Activated CD4-positive, alpha-beta T cell treated with anti-CD3 and anti-CD28 coated beads, Interleukin-2, amount 10 ng/mL, durations not matched to agents 24 days and 14 days (primary cell): ENCODE measurements at regions of chr3 and their contacts with region 1.

Region 1: GRCh38 chr3:15815696-15816095 is 17.9 kb upstream of the ANKRD28 start:
- DNase-seq: no peak
- H3K4me3 Mint-ChIP-seq: no peak overlapping the region
- H3K27ac Mint-ChIP-seq: no peak overlapping the region
- H3K4me1 Mint-ChIP-seq: peaks cover 23% of the 10 kb centered on the region
- H3K27me3 Mint-ChIP-seq: no peaks in the 10 kb centered on the region

Region 2: GRCh38 chr3:15676259-15676658 is 139.4 kb before region 1 on chr3:
- intact Hi-C with region 1: no loop called
- DNase-seq: no peak
- H3K4me3 Mint-ChIP-seq: no peak overlapping the region
- H3K27ac Mint-ChIP-seq: no peak overlapping the region
- H3K4me1 Mint-ChIP-seq: no peaks in the 10 kb centered on the region
- H3K27me3 Mint-ChIP-seq: no peaks in the 10 kb centered on the region

Region 3: DNA sequence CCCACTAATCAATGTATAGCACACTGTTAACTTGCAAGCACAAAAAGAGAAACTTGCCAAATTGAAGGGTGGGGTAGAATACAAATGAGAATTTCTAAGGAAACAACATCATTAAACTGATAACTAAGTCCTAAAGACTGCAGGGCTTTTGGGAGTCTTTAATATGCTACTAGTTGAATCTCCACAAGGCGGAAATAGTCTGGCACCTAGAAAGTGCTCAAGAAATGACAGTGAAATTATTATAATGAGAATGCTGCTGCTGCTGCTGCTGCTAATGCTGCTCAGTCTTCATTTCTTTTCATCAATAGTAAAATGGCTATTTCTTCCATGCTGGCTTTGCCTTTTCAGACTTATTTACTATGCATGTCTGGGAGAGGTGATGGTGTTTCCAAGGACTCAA is 122.3 kb before region 1 on chr3:
- intact Hi-C with region 1: loop called (anchors 5 kb)
- DNase-seq: no peak
- H3K4me3 Mint-ChIP-seq: no peak overlapping the region
- H3K27ac Mint-ChIP-seq: no peak overlapping the region
- H3K4me1 Mint-ChIP-seq: peaks cover 3% of the 10 kb centered on the region
- H3K27me3 Mint-ChIP-seq: no peaks in the 10 kb centered on the region

Region 4: GRCh38 chr3:16177962-16178627 is 362.4 kb after region 1 on chr3:
- intact Hi-C with region 1: loop called (anchors 1 kb)
- DNase-seq: peak; percentile 90
- H3K4me3 Mint-ChIP-seq: no peak overlapping the region
- H3K27ac Mint-ChIP-seq: no peak overlapping the region
- H3K4me1 Mint-ChIP-seq: peaks cover 3% of the 10 kb centered on the region
- H3K27me3 Mint-ChIP-seq: peaks cover 26% of the 10 kb centered on the region